Activated CD4-positive, alpha-beta memory T cell treated with anti-CD3 and anti-CD28 coated beads for 36 hours (primary cell): ENCODE measurements at regions of chr1 and their contacts with region 1.

Region 1: GRCh38 chr1:150110116-150110515 is 39.6 kb upstream of the PLEKHO1 start:
- DNase-seq: no peak
- H3K4me3 Mint-ChIP-seq: peak overlapping the region; percentile 69
- H3K27ac Mint-ChIP-seq: peak overlapping the region; percentile 93
- H3K4me1 Mint-ChIP-seq: peaks cover 68% of the 10 kb centered on the region
- H3K27me3 Mint-ChIP-seq: no peaks in the 10 kb centered on the region

Region 2: GRCh38 chr1:150072959-150073358 is 37.2 kb before region 1 on chr1:
- CTCF ChIA-PET with region 1: interaction called, 6 read pairs
- POLR2A ChIA-PET with region 1: interaction called, 3 read pairs
- intact Hi-C with region 1: loop called (anchors 2 kb)
- DNase-seq: no peak
- H3K4me3 Mint-ChIP-seq: no peak overlapping the region
- H3K27ac Mint-ChIP-seq: no peak overlapping the region
- H3K4me1 Mint-ChIP-seq: peaks cover 30% of the 10 kb centered on the region
- H3K27me3 Mint-ChIP-seq: no peaks in the 10 kb centered on the region

Region 3: DNA sequence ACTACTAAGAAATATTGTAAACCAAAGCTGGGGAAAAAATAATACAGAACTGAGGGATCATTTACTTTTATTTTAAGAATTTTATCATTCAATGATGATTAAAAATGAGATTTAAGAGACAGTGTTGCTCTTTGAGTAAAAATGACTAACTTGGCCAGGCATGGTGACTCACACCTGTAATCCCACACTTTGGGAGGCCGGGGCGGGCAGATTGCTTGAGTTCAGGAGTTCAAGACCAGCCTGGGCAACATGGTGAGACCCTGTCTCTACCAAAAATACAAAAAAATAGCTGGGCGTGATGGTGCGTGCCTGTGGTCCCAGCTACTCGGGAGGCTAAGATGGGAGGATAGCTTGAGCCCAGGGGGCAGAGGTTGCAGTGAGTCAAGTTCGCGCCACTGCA is 17.8 kb after region 1 on chr1:
- CTCF ChIA-PET with region 1: interaction called, 3 read pairs
- POLR2A ChIA-PET with region 1: interaction called, 6 read pairs
- intact Hi-C with region 1: loop called (anchors 2 kb)
- DNase-seq: peak; percentile 73
- H3K4me3 Mint-ChIP-seq: no peak overlapping the region
- H3K27ac Mint-ChIP-seq: peak overlapping the region; percentile 78
- H3K4me1 Mint-ChIP-seq: peaks cover 25% of the 10 kb centered on the region
- H3K27me3 Mint-ChIP-seq: no peaks in the 10 kb centered on the region

Region 4: GRCh38 chr1:150149271-150150132 is 39.4 kb after region 1 on chr1 and contains the start of gene PLEKHO1:
- CTCF ChIA-PET with region 1: interaction called, 3 read pairs
- POLR2A ChIA-PET with region 1: no interaction called
- intact Hi-C with region 1: loop called (anchors 2 kb)
- DNase-seq: peak; percentile 90
- H3K4me3 Mint-ChIP-seq: peak within 1 kb of the TSS; percentile 90
- H3K27ac Mint-ChIP-seq: peak within 1 kb of the TSS; percentile 93
- H3K4me1 Mint-ChIP-seq: peaks cover 68% of the 10 kb centered on the region
- H3K27me3 Mint-ChIP-seq: no peaks in the 10 kb centered on the region
- total RNA-seq, gene PLEKHO1: 28.7 to 31.8 TPM

Region 5: GRCh38 chr1:150227228-150227627 is 117.1 kb after region 1 on chr1:
- CTCF ChIA-PET with region 1: no interaction called
- POLR2A ChIA-PET with region 1: no interaction called
- intact Hi-C with region 1: no loop called
- DNase-seq: no peak
- H3K4me3 Mint-ChIP-seq: no peak overlapping the region
- H3K27ac Mint-ChIP-seq: no peak overlapping the region
- H3K4me1 Mint-ChIP-seq: peaks cover 5% of the 10 kb centered on the region
- H3K27me3 Mint-ChIP-seq: no peaks in the 10 kb centered on the region